Activated CD8-positive, alpha-beta T cell treated with anti-CD3 and anti-CD28 coated beads for 36 hours (primary cell): ENCODE measurements at regions of chr18 and their contacts with region 1.

Region 1: GRCh38 chr18:57353940-57354461 is 1.6 kb downstream of the ST8SIA3 start:
- DNase-seq: peak; percentile 37
- ATAC-seq: no peak
- H3K4me3 Mint-ChIP-seq: no peak overlapping the region
- H3K27ac Mint-ChIP-seq: no peak overlapping the region
- H3K4me1 Mint-ChIP-seq: no peaks in the 10 kb centered on the region
- H3K27me3 Mint-ChIP-seq: peaks cover 53% of the 10 kb centered on the region
- CTCF ChIP-seq: no peak

Region 2: GRCh38 chr18:57364460-57364859 is 10.5 kb after region 1 on chr18:
- CTCF ChIA-PET with region 1: no interaction called
- POLR2A ChIA-PET with region 1: no interaction called
- intact Hi-C with region 1: no loop called
- DNase-seq: no peak
- ATAC-seq: no peak
- H3K4me3 Mint-ChIP-seq: no peak overlapping the region
- H3K27ac Mint-ChIP-seq: no peak overlapping the region
- H3K4me1 Mint-ChIP-seq: no peaks in the 10 kb centered on the region
- H3K27me3 Mint-ChIP-seq: peaks cover 13% of the 10 kb centered on the region
- CTCF ChIP-seq: no peak

Region 3: DNA sequence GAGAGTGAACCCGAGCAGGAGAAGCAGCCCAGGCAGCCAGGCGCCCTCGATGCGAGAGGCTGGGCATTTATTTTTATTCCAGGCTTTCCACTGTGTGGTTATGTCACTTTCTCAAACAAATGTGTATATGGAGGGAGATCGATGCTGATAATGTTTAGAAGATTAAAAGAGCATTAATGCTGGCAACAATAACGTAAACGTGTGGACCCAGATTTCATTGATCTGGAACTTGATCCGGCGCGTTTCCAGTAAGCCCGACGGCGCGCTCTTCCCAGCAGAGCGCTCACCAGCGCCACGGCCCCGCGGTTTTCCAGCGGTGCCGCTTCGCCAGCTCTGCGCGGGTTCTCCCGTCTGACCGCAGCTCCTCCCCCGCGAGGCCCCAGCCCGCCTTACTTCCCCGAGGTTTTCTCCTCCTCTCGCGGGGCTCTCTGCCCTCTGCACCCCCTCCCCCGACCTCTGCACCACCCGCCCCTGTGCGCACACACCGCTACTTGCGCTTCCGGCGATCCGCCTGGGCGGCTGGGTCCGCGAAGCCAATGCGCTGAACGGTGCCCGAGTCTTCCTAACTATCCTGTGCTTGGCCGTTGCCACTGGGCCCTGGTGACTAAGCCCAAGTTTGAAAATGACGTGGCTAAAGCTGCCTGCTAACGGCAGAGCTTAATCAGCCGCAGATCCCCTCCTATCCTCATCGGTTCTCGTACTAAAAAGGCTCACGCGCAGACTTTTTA is 87.2 kb after region 1 on chr18:
- CTCF ChIA-PET with region 1: no interaction called
- POLR2A ChIA-PET with region 1: no interaction called
- intact Hi-C with region 1: loop called (anchors 5 kb)
- DNase-seq: peak; percentile 59
- ATAC-seq: peak; percentile 60
- H3K4me3 Mint-ChIP-seq: peak overlapping the region; percentile 1
- H3K27ac Mint-ChIP-seq: no peak overlapping the region
- H3K4me1 Mint-ChIP-seq: peaks cover 36% of the 10 kb centered on the region
- H3K27me3 Mint-ChIP-seq: peaks cover 82% of the 10 kb centered on the region
- CTCF ChIP-seq: no peak